ENCODE measurements at regions of chr4 and their contacts with region 1.

Region 1: GRCh38 chr4:88514557-88515511 is 8.7 kb downstream of the PYURF start:
- DNase-seq: no peak
- CTCF ChIP-seq: no peak

Region 2: GRCh38 chr4:88255111-88255510 is 259.7 kb before region 1 on chr4:
- CTCF ChIA-PET with region 1: interaction called, 17 read pairs
- POLR2A ChIA-PET with region 1: no interaction called
- DNase-seq: no peak
- CTCF ChIP-seq: no peak

Region 3: DNA sequence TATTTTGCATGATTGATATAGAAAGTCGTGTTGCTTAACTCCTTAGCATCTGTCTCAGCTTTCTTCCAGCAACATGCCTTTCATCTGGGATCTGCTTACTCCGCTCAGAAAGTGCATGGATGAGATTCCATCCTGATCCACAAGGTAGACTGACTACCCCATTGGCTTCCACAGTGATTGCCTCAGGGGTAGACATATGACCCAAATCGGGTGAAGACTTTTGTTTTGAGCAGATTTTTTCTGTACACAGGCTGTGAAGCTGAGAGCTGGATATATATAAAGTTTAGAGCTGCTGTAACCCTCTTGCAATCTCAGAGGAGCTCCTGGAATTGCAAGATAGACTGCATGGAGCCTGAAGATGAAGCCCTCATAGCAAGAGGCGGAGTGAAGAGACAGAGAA is 144.9 kb before region 1 on chr4:
- CTCF ChIA-PET with region 1: interaction called, 20 read pairs
- POLR2A ChIA-PET with region 1: no interaction called
- DNase-seq: no peak
- CTCF ChIP-seq: no peak

Region 4: GRCh38 chr4:88378691-88379559 is 135.9 kb before region 1 on chr4 and contains the start of gene HERC6:
- CTCF ChIA-PET with region 1: interaction called, 24 read pairs
- POLR2A ChIA-PET with region 1: no interaction called
- DNase-seq: peak; percentile 84
- CTCF ChIP-seq: peak; percentile 79

Region 5: DNA sequence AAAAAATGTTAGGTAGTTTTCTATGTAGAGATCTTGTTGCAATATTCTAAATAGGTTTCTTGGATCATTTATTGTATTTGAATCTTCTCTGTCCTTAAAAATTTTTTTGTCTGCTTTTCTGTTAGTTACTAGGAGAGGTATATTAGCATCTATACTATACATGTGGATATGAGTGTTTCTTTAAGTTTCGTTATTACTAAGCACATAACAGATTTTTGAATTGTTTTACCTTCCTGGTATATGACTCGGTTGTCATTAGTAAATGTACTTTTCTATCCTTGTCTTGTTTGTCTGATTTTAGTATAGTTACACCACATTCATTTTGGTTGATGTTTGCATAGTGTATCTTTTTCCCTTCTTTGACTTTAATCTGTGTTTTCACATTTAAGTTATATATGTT is 11.5 kb before region 1 on chr4:
- CTCF ChIA-PET with region 1: interaction called, 35 read pairs
- POLR2A ChIA-PET with region 1: no interaction called
- DNase-seq: no peak
- CTCF ChIP-seq: no peak

Region 6: DNA sequence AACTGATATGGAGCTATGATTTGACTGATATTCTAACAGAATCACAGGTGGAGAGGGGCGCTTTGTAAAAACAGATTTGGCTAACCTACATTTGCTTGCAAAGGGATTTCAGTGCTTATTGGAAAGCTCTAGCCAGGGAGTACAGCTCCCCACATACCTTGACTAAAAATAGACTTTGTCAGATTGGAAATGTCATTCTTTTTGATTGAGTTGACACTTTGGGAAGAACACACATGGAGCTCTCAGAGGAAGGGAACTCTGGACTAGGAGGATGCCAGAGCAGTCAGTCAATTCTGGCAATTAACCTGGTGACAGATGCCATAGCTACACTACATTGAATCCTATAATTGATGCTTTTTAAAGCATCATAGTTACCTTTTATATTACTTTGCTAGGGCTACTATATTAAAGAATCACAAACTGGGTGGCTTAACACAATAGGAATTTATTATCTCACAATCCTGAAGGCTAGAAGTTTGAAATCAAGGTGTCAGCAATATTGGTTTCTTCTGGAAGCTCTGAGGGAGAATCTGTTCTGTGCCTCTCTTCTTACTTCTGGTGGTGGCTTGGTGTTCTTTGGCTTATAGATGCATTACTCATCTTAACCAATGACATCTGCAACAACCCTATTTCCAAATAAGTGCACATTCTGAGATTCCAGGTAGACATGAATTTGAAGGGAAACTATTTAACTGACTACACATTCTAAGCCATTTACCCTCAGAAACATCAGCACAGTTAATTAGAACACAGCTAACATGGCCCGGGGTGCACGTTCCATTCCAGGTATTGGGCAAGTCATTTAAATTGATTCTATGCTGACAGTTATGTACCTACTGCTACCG is 69.0 kb after region 1 on chr4:
- CTCF ChIA-PET with region 1: no interaction called
- POLR2A ChIA-PET with region 1: no interaction called
- DNase-seq: no peak
- CTCF ChIP-seq: no peak

Measured in GM10248 (cell line).